Left ventricle myocardium inferior (tissue), 1 donor: ENCODE measurements at regions of chr16 and their contacts with region 1.

Region 1: DNA sequence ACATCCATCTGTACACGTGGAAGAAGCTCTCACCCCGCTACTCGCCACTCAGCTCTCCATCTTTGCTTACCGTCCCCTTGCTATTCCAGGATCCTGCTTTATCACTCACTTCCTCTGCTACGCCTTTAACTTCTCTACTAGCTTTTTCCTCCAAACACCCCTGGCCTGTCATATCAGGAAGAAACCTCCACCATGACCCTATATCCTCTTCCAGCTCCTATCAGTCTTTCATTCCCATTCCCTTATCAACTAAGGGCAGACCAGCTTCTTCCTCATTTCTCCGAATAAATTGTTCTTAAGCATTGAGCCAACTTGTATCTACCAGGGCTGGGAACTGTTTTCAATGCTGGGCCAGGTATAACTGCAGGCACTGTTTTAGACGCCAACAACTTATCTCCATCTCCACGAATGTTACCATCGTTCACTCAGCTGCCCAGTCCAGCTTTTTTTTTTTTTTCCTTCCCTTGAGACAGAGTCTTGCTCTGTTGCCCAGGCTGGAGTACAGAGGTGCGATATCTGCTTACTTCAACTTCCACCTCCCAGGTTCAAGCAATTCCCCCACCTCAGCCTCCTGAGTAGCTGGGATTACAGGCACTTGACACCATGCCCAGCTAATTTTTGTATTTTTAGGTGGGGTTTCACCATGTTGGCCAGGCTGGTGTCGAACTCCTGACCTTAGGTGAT is 4.3 kb downstream of the IQCK start:
- DNase-seq: no peak
- H3K4me3 ChIP-seq: no peak overlapping the region
- H3K27ac ChIP-seq: peak overlapping the region; percentile 90
- H3K4me1 ChIP-seq: peaks cover 42% of the 10 kb centered on the region
- H3K27me3 ChIP-seq: no peaks in the 10 kb centered on the region
- CTCF ChIP-seq: no peak

Region 2: GRCh38 chr16:19601083-19601976 is 121.1 kb before region 1 on chr16:
- intact Hi-C with region 1: no loop called
- DNase-seq: no peak
- H3K4me3 ChIP-seq: no peak overlapping the region
- H3K27ac ChIP-seq: no peak overlapping the region
- H3K4me1 ChIP-seq: peaks cover 20% of the 10 kb centered on the region
- H3K27me3 ChIP-seq: no peaks in the 10 kb centered on the region
- CTCF ChIP-seq: peak; percentile 75

Region 3: GRCh38 chr16:19879241-19879792 is 156.9 kb after region 1 on chr16:
- intact Hi-C with region 1: loop called (anchors 10 kb)
- DNase-seq: peak; percentile 29
- H3K4me3 ChIP-seq: no peak overlapping the region
- H3K27ac ChIP-seq: peak overlapping the region; percentile 97
- H3K4me1 ChIP-seq: peaks cover 99% of the 10 kb centered on the region
- H3K27me3 ChIP-seq: no peaks in the 10 kb centered on the region
- CTCF ChIP-seq: no peak